Aorta (tissue), 5 donors: ENCODE measurements at regions of chr6 and their contacts with region 1.

Region 1: GRCh38 chr6:92415649-92416048 is 1003.7 kb downstream of the EPHA7 start:
- DNase-seq: no peak
- ATAC-seq: no peak
- H3K4me3 ChIP-seq: no peak overlapping the region
- H3K27ac ChIP-seq: no peak overlapping the region
- H3K4me1 ChIP-seq: no peaks in the 10 kb centered on the region
- H3K27me3 ChIP-seq: no peaks in the 10 kb centered on the region

Region 2: DNA sequence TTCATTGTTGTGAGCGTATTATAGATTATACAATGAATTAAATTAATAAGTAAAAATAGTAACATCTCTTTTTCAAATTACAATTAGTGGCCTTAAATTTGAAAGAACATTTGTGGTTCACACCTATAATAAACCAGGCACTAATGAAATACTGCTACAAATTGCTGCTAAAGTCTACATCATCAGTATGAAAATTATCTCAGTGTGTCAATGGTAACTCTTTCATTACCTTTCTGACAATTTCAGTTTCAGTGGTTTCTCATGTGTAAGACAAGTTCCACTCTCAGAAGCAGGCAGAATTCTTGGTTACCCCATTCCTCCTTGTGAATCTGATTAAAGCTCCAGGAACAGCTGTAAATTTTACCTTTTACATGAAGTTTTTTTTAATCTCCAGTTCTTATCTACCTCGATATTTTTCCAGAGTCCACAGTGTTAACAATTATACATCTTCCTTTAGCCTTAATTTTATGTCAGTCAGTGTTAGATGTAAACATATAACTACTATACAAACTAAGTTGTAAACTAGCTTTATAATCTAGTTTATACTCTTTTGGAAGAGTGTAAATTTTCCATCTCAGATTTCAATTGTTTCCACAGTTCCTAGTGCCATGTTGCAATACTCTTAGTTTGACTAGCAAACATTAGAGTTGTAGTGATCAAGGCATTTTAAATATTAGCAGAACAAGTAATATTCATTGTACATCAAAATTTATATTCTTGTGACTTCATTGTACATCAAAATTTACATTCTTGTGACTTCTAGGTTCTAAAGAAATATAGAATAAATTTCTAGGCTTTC is 34.6 kb before region 1 on chr6:
- intact Hi-C with region 1: loop called in 1 of 2 experiments (anchors 2 kb)
- DNase-seq: no peak
- ATAC-seq: no peak
- H3K4me3 ChIP-seq: no peak overlapping the region
- H3K27ac ChIP-seq: no peak overlapping the region
- H3K4me1 ChIP-seq: no peaks in the 10 kb centered on the region
- H3K27me3 ChIP-seq: no peaks in the 10 kb centered on the region

Region 3: GRCh38 chr6:92399911-92400310 is 15.7 kb before region 1 on chr6:
- intact Hi-C with region 1: no loop called
- DNase-seq: no peak
- ATAC-seq: no peak
- H3K4me3 ChIP-seq: no peak overlapping the region
- H3K27ac ChIP-seq: no peak overlapping the region
- H3K4me1 ChIP-seq: no peaks in the 10 kb centered on the region
- H3K27me3 ChIP-seq: no peaks in the 10 kb centered on the region